ENCODE measurements at regions of chr6 and their contacts with region 1.

Region 1: DNA sequence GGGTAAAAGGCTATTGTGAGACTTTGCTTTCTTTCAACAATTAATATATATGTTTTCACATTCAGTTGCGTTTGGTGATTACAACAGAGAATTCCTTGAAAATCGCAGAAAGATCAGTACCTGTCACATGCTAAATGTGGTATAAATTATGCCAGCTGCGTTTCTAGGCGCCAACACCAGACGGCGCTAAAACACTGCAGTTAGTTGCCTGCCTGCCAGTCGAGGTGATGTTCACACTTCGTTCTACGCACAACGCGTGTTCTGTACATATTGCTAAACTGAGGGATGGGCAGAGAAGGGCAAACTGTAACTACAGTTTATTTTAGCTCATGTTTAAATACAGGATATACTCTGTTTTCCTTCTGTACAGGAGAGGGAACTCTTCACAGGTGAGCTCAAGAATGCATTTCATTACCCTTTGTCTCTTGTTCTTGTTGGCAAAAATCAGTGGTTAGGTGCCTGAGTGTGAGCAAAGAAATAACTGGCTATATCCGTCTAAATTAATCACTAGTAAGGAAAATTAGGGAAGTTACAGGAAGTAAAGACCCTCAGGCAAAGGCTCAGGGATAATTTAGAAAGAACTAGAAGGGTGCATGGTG is 100.1 kb upstream of the RGS17 start:
- DNase-seq: peak; percentile 57
- H3K4me3 Mint-ChIP-seq: no peak overlapping the region
- H3K27ac Mint-ChIP-seq: no peak overlapping the region
- H3K4me1 Mint-ChIP-seq: no peaks in the 10 kb centered on the region
- H3K27me3 Mint-ChIP-seq: no peaks in the 10 kb centered on the region

Region 2: GRCh38 chr6:152117156-152118133 is 1113.7 kb before region 1 on chr6:
- CTCF ChIA-PET with region 1: no interaction called
- POLR2A ChIA-PET with region 1: no interaction called
- intact Hi-C with region 1: no loop called
- DNase-seq: no peak
- H3K4me3 Mint-ChIP-seq: no peak overlapping the region
- H3K27ac Mint-ChIP-seq: no peak overlapping the region
- H3K4me1 Mint-ChIP-seq: peaks cover 3% of the 10 kb centered on the region
- H3K27me3 Mint-ChIP-seq: peaks cover 1% of the 10 kb centered on the region

Region 3: GRCh38 chr6:153162172-153162571 is 69.0 kb before region 1 on chr6:
- CTCF ChIA-PET with region 1: no interaction called
- POLR2A ChIA-PET with region 1: no interaction called
- intact Hi-C with region 1: no loop called
- DNase-seq: no peak
- H3K4me3 Mint-ChIP-seq: no peak overlapping the region
- H3K27ac Mint-ChIP-seq: no peak overlapping the region
- H3K4me1 Mint-ChIP-seq: no peaks in the 10 kb centered on the region
- H3K27me3 Mint-ChIP-seq: peaks cover 8% of the 10 kb centered on the region

Region 4: DNA sequence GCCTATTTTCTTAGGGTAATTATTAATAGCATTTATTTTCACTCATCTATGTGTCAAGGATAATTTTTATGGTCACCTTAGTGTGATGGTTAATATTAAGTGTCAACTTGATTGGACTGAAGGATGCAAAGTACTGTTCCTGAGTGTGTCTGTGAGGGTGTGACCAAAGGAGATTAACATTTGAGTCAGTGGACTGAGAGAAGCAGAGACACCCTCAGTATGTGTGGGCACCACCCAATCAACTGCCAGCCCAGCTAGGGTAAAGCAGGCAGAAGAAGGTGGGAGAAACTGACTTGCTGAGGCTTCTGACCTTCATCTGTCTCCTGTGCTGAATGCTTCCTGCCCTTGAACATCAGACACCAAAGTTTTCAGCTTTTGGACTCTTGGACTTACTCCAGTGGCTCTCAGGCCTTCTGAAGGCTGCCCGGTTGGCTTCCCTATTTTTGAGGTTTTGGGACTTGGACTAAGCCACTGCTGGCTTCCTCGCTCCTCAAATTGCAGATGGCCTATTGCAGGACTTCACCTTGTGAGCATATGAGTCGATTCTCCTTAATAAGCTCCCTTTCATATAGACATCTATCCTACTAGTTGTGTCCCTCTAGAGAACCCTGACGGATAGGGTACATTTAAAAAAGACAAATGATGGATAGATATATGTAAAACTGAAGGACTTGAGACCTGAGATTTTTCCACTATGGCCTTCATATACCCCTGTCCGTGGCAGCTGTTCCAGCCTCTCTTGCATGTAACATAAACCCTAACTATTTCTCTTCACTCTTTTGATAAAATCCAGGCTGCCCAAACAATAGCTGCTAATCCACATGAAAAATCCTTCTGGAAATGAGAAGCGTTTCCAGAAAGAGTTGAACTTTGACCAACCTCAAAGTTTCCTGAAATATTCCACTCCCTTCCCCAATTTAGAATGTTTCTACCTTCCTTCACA is 37.9 kb before region 1 on chr6:
- CTCF ChIA-PET with region 1: no interaction called
- POLR2A ChIA-PET with region 1: no interaction called
- intact Hi-C with region 1: no loop called
- DNase-seq: no peak
- H3K4me3 Mint-ChIP-seq: no peak overlapping the region
- H3K27ac Mint-ChIP-seq: no peak overlapping the region
- H3K4me1 Mint-ChIP-seq: no peaks in the 10 kb centered on the region
- H3K27me3 Mint-ChIP-seq: no peaks in the 10 kb centered on the region

Region 5: GRCh38 chr6:153312641-153313040 is 81.5 kb after region 1 on chr6:
- CTCF ChIA-PET with region 1: interaction called, 3 read pairs
- POLR2A ChIA-PET with region 1: no interaction called
- intact Hi-C with region 1: loop called (anchors 1 kb)
- DNase-seq: peak; percentile 41
- H3K4me3 Mint-ChIP-seq: no peak overlapping the region
- H3K27ac Mint-ChIP-seq: no peak overlapping the region
- H3K4me1 Mint-ChIP-seq: no peaks in the 10 kb centered on the region
- H3K27me3 Mint-ChIP-seq: no peaks in the 10 kb centered on the region

Region 6: GRCh38 chr6:153511896-153512496 is 280.8 kb after region 1 on chr6:
- CTCF ChIA-PET with region 1: interaction called, 7 read pairs
- POLR2A ChIA-PET with region 1: no interaction called
- intact Hi-C with region 1: loop called (anchors 1 kb)
- DNase-seq: no peak
- H3K4me3 Mint-ChIP-seq: no peak overlapping the region
- H3K27ac Mint-ChIP-seq: no peak overlapping the region
- H3K4me1 Mint-ChIP-seq: no peaks in the 10 kb centered on the region
- H3K27me3 Mint-ChIP-seq: no peaks in the 10 kb centered on the region

Region 7: GRCh38 chr6:153947808-153948447 is 716.8 kb after region 1 on chr6:
- CTCF ChIA-PET with region 1: no interaction called
- POLR2A ChIA-PET with region 1: no interaction called
- intact Hi-C with region 1: loop called (anchors 5 kb)
- DNase-seq: no peak
- H3K4me3 Mint-ChIP-seq: no peak overlapping the region
- H3K27ac Mint-ChIP-seq: no peak overlapping the region
- H3K4me1 Mint-ChIP-seq: no peaks in the 10 kb centered on the region
- H3K27me3 Mint-ChIP-seq: peaks cover 2% of the 10 kb centered on the region

Measured in activated CD4-positive, alpha-beta memory T cell treated with anti-CD3 and anti-CD28 coated beads for 36 hours (primary cell).